ENCODE measurements at regions of chr3 and their contacts with region 1.

Region 1: DNA sequence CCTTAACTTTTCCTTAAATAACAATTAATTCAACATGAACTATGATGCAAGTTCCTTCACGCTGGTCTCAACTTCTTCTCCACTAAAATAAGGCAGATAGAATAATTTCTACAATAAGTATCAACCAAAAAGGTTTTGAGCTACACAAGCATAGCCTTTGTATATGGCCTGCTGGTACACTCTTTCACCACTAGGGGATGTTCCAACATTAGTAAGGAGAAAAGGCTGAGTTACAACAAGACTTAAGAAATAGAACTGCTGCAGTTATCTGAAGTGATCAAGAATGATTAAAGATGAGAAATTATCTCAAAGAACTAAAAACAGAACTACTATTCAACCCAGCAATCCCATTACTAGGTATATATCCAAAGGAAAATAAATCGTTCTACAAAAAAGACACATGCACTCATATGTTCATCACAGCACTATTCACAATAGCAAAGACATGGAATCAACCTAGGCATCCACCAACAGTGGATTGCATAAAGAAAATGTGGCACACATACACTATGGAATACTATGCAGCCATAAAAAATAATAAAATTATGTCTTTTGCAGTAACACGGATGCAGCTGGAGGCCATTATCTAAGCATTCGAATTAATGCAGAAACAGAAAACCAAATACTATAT is 14.4 kb downstream of the ATP13A3 start:
- DNase-seq: peak in 3 of 9 experiments; percentile 21 to 76 (median 65)
- ATAC-seq: peak; percentile 96
- H3K4me3 ChIP-seq: no peak overlapping the region
- H3K4me3 Mint-ChIP-seq: no peak overlapping the region
- H3K27ac ChIP-seq: no peak overlapping the region
- H3K27ac Mint-ChIP-seq: no peak overlapping the region
- H3K4me1 ChIP-seq: no peaks in the 10 kb centered on the region
- H3K4me1 Mint-ChIP-seq: peaks cover 7% of the 10 kb centered on the region
- H3K27me3 ChIP-seq: no peaks in the 10 kb centered on the region
- H3K27me3 Mint-ChIP-seq: no peaks in the 10 kb centered on the region
- CTCF ChIP-seq: peak; percentile 99

Region 2: DNA sequence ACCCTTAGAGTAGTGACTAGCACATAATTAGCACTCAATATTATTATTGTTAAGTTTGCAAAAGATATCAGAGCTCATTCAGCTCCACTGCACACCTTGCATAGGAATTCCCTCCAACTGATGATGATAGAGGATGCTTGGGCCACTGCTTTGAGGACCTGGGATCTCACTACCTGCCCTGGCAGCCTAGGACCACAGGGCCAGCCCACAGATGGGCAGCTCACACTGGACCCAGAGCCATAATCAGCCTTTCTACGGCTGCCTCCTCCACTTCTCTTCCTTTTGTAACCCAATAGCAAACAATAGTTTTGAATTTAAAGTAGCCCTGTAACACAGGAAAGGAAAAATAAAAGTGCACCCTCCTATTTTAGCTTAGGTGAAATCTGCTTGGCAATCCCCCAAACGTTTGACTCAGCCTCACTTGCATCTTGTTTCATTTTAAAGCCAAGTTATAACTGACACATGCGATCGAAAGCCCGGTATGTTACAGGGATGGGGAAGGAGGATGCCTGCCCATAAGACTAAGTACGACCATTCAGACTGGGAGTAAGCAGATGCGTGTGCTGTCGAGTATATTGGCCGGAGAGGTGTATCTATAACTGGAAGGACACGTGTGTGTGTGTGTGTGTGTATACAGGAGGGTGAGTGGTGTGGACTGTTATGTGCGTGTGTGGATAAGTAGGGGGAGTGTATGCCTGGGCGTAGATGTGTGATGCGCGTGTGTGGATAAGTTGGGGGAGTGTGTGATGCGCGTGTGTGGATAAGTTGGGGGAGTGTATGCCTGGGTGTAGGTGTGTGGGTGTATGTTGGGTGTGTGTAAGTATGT is 187.2 kb before region 1 on chr3:
- CTCF ChIA-PET with region 1: no interaction called
- POLR2A ChIA-PET with region 1: no interaction called
- intact Hi-C with region 1: no loop called
- DNase-seq: no peak
- ATAC-seq: no peak
- H3K4me3 ChIP-seq: no peak overlapping the region
- H3K4me3 Mint-ChIP-seq: no peak overlapping the region
- H3K27ac ChIP-seq: no peak overlapping the region
- H3K27ac Mint-ChIP-seq: no peak overlapping the region
- H3K4me1 ChIP-seq: no peaks in the 10 kb centered on the region
- H3K4me1 Mint-ChIP-seq: no peaks in the 10 kb centered on the region
- H3K27me3 ChIP-seq: no peaks in the 10 kb centered on the region
- H3K27me3 Mint-ChIP-seq: peaks cover 7% of the 10 kb centered on the region
- CTCF ChIP-seq: no peak

Region 3: DNA sequence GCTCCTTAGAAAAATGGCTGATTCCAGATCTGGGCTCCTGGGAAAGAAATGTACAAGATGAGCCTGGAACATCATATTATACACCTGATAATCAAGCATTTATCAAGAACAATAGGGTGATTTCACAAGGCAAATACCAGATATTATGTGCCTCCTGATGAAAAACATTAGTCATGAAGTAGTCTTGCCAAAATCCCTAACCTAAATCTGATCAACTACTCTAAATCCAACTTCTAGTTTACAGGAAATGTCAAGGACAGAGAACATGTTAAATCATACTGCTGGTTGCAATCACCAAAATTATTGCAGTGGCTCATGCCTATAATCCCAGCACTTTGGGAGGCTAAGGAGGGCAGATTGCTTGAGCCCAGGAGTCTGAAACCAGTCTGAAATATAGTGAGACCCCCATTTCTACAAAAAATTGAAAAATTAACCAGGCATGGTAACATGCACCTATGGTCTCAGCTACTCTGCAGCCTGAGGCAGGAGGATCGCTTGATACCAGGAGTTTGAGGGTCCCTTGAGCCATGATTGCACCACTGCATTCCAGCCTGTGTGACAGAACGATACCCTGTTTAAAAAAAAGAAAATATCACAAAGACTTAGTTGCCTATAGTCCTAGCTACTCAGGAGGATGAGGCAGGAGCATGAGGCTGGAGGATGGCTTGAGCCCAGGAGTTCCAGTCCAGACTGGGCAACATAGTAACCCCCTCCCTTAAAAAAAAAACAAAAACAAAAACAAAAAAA is 49.3 kb after region 1 on chr3:
- CTCF ChIA-PET with region 1: interaction called, 6 read pairs
- POLR2A ChIA-PET with region 1: no interaction called
- intact Hi-C with region 1: loop called (anchors 1 to 2 kb)
- DNase-seq: no peak
- ATAC-seq: no peak
- H3K4me3 ChIP-seq: no peak overlapping the region
- H3K4me3 Mint-ChIP-seq: no peak overlapping the region
- H3K27ac ChIP-seq: no peak overlapping the region
- H3K27ac Mint-ChIP-seq: no peak overlapping the region
- H3K4me1 ChIP-seq: no peaks in the 10 kb centered on the region
- H3K4me1 Mint-ChIP-seq: no peaks in the 10 kb centered on the region
- H3K27me3 ChIP-seq: no peaks in the 10 kb centered on the region
- H3K27me3 Mint-ChIP-seq: no peaks in the 10 kb centered on the region
- CTCF ChIP-seq: no peak

Region 4: DNA sequence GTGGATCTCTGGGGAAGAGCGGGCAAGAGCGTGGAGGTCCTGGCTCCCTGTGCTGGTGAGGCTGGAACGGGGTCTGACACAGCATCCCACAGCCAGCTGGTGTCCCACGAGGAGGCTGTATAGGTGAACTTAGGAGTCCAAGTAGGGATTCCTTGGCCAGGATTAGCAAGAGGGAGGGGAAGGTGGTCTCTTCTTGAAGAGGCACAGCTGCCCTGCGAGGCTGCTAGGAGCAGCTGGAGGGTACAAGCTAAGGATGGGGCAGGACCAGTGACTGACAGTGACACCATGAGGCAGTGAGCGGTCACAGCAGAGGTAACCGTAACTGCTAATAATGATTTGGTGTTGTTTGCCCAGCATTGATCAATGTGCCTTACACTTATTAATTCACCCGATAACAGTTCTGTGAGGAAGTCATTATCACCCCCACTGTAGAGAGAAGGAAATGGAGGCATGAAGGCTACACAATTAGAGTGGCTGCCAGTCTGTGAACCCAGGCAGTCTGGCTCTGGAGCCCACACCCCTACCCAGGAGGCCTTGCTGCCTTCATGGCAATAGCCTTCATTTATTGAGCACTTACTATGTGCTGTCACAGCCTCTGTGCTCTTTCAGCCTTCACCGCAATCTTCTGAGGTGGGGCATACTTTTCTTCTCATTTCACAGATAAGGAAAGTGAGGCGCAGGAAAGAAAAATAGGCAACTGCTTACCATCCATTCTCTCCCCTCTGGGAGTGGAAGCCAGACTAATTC is 101.5 kb after region 1 on chr3:
- CTCF ChIA-PET with region 1: interaction called, 6 read pairs
- POLR2A ChIA-PET with region 1: interaction called, 3 read pairs
- intact Hi-C with region 1: loop called (anchors 1 kb)
- DNase-seq: peak in 5 of 9 experiments; percentile 26 to 58 (median 45)
- ATAC-seq: peak; percentile 79
- H3K4me3 ChIP-seq: no peak overlapping the region
- H3K4me3 Mint-ChIP-seq: no peak overlapping the region
- H3K27ac ChIP-seq: no peak overlapping the region
- H3K27ac Mint-ChIP-seq: no peak overlapping the region
- H3K4me1 ChIP-seq: no peaks in the 10 kb centered on the region
- H3K4me1 Mint-ChIP-seq: no peaks in the 10 kb centered on the region
- H3K27me3 ChIP-seq: peaks cover 3 to 4% of the 10 kb centered on the region in 2 experiments
- H3K27me3 Mint-ChIP-seq: peaks cover 26% of the 10 kb centered on the region
- CTCF ChIP-seq: peak; percentile 47

Region 5: DNA sequence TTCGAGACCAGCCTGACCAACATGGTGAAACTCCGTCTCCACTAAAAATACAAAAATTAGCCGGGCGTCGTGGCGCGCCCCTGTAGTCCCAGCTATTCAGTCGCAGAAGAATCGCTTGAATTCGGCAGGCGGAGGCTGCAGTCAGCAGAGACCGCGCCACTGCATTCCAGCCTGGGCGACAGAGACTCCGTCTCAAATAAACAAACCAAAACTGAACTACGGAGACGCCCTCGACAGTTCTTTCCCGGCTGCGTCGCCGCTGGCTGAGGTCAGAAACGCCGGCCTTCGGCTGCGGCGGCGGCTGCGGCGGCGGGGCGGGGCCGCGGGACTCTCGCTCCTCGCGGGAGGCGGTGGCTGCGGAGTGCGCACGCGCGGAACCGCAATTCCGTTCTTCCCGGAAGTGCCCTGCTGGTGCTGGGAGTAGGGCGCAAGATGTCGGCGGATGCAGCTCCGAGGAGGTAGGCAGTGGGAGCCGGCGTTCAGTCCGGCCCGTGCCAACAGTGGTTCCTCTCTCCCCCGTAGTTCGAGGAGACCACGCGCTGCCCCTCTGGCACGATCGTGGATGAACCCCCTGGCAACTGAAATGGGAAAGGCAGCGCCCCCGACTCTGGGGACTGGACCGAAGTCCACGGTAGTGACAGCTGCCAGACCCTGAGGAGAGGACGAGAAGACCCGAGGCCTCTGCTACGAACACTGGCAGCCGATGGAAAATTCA is 111.4 kb after region 1 on chr3:
- CTCF ChIA-PET with region 1: interaction called, 10 read pairs
- POLR2A ChIA-PET with region 1: interaction called, 7 read pairs
- intact Hi-C with region 1: no loop called
- DNase-seq: peak; percentile 84 to 96 (median 93)
- ATAC-seq: peak; percentile 94
- H3K4me3 ChIP-seq: peak overlapping the region; percentile 75 to 99
- H3K4me3 Mint-ChIP-seq: peak overlapping the region; percentile 91
- H3K27ac ChIP-seq: peak overlapping the region; percentile 64 to 94
- H3K27ac Mint-ChIP-seq: peak overlapping the region; percentile 94
- H3K4me1 ChIP-seq: peaks cover 12% of the 10 kb centered on the region
- H3K4me1 Mint-ChIP-seq: peaks cover 10% of the 10 kb centered on the region
- H3K27me3 ChIP-seq: no peaks in the 10 kb centered on the region
- H3K27me3 Mint-ChIP-seq: no peaks in the 10 kb centered on the region
- CTCF ChIP-seq: no peak

Region 6: GRCh38 chr3:194592798-194593752 is 120.7 kb after region 1 on chr3:
- CTCF ChIA-PET with region 1: interaction called, 55 read pairs
- POLR2A ChIA-PET with region 1: no interaction called
- intact Hi-C with region 1: loop called (anchors 1 kb)
- DNase-seq: no peak
- ATAC-seq: no peak
- H3K4me3 ChIP-seq: no peak overlapping the region
- H3K4me3 Mint-ChIP-seq: no peak overlapping the region
- H3K27ac ChIP-seq: no peak overlapping the region
- H3K27ac Mint-ChIP-seq: no peak overlapping the region
- H3K4me1 ChIP-seq: no peaks in the 10 kb centered on the region
- H3K4me1 Mint-ChIP-seq: peaks cover 4% of the 10 kb centered on the region
- H3K27me3 ChIP-seq: no peaks in the 10 kb centered on the region
- H3K27me3 Mint-ChIP-seq: no peaks in the 10 kb centered on the region
- CTCF ChIP-seq: no peak

Measured in CD8-positive, alpha-beta T cell (primary cell).